ENCODE measurements at regions of chr6 and their contacts with region 1.

Region 1: GRCh38 chr6:18752278-18753068 is 365.3 kb downstream of the RNF144B start:
- DNase-seq: no peak
- ATAC-seq: no peak
- H3K4me3 ChIP-seq: no peak overlapping the region
- H3K27ac ChIP-seq: no peak overlapping the region
- H3K4me1 ChIP-seq: no peaks in the 10 kb centered on the region
- H3K27me3 ChIP-seq: no peaks in the 10 kb centered on the region
- CTCF ChIP-seq: no peak

Region 2: GRCh38 chr6:18284261-18284660 is 468.2 kb before region 1 on chr6:
- CTCF ChIA-PET with region 1: interaction called, 11 read pairs
- POLR2A ChIA-PET with region 1: no interaction called
- in situ Hi-C with region 1: no loop called
- intact Hi-C with region 1: no loop called
- DNase-seq: no peak
- ATAC-seq: no peak
- H3K4me3 ChIP-seq: no peak overlapping the region
- H3K27ac ChIP-seq: no peak overlapping the region
- H3K4me1 ChIP-seq: no peaks in the 10 kb centered on the region
- H3K27me3 ChIP-seq: peaks cover 7% of the 10 kb centered on the region; the same call in 1 of the 2 replicates
- CTCF ChIP-seq: no peak

Region 3: GRCh38 chr6:18684343-18684742 is 68.1 kb before region 1 on chr6:
- CTCF ChIA-PET with region 1: no interaction called
- POLR2A ChIA-PET with region 1: no interaction called
- in situ Hi-C with region 1: no loop called
- intact Hi-C with region 1: no loop called
- DNase-seq: no peak
- ATAC-seq: no peak
- H3K4me3 ChIP-seq: no peak overlapping the region
- H3K27ac ChIP-seq: no peak overlapping the region
- H3K4me1 ChIP-seq: no peaks in the 10 kb centered on the region
- H3K27me3 ChIP-seq: no peaks in the 10 kb centered on the region
- CTCF ChIP-seq: no peak

Region 4: GRCh38 chr6:18861204-18861603 is 108.7 kb after region 1 on chr6:
- CTCF ChIA-PET with region 1: interaction called, 10 read pairs
- POLR2A ChIA-PET with region 1: no interaction called
- in situ Hi-C with region 1: no loop called
- intact Hi-C with region 1: no loop called
- DNase-seq: no peak
- ATAC-seq: no peak
- H3K4me3 ChIP-seq: no peak overlapping the region
- H3K27ac ChIP-seq: no peak overlapping the region
- H3K4me1 ChIP-seq: no peaks in the 10 kb centered on the region
- H3K27me3 ChIP-seq: no peaks in the 10 kb centered on the region
- CTCF ChIP-seq: no peak

Region 5: GRCh38 chr6:19851241-19852089 is 1099.0 kb after region 1 on chr6:
- CTCF ChIA-PET with region 1: no interaction called
- POLR2A ChIA-PET with region 1: no interaction called
- in situ Hi-C with region 1: no loop called
- intact Hi-C with region 1: loop called (anchors 10 kb)
- DNase-seq: peak; percentile 24
- ATAC-seq: peak; percentile 97
- H3K4me3 ChIP-seq: peak overlapping the region in 1 of 2 experiments; percentile 6; a peak in 1 of 4 replicates
- H3K27ac ChIP-seq: peak overlapping the region; percentile 60
- H3K4me1 ChIP-seq: peaks cover 18% of the 10 kb centered on the region
- H3K27me3 ChIP-seq: no peaks in the 10 kb centered on the region
- CTCF ChIP-seq: peak; percentile 93